Heart right ventricle (tissue), 16 donors: ENCODE measurements at regions of chr11 and their contacts with region 1.

Region 1: GRCh38 chr11:115075356-115075755 is 397.0 kb downstream of the NXPE2 start:
- DNase-seq: no peak
- ATAC-seq: peak in 2 of 8 donors; percentile 37 to 50
- H3K4me3 ChIP-seq: no peak overlapping the region
- H3K27ac ChIP-seq: no peak overlapping the region
- H3K4me1 ChIP-seq: no peaks in the 10 kb centered on the region
- H3K27me3 ChIP-seq: peaks cover 0 to 17% (median 0%) of the 10 kb centered on the region in 7 donors
- CTCF ChIP-seq: no peak

Region 2: DNA sequence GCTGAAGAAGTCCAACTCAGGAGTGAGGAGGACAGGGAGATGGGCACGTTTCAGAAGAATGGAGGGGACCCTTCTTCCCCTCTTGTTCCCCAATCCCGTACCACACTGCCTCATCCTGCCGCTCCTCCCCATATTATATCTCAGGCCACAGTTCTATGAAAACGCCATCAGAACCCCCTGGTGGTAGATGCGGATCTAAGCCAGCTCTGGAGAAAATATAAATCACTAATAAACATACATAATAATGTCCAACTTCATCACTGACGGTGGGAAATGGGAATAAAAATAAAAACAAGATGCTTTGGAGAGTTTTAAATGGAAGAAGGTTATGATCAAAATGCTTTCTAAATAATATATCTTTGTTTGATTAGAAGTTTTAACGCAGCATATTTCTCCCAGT is 28.6 kb after region 1 on chr11:
- intact Hi-C with region 1: loop called in 1 of 10 experiments (anchors 1 kb)
- DNase-seq: no peak
- ATAC-seq: no peak
- H3K4me3 ChIP-seq: no peak overlapping the region
- H3K27ac ChIP-seq: no peak overlapping the region
- H3K4me1 ChIP-seq: no peaks in the 10 kb centered on the region
- H3K27me3 ChIP-seq: peaks cover 0 to 8% (median 0%) of the 10 kb centered on the region in 7 donors
- CTCF ChIP-seq: no peak